Aorta (tissue), 5 donors: ENCODE measurements at regions of chr21 and their contacts with region 1.

Region 1: DNA sequence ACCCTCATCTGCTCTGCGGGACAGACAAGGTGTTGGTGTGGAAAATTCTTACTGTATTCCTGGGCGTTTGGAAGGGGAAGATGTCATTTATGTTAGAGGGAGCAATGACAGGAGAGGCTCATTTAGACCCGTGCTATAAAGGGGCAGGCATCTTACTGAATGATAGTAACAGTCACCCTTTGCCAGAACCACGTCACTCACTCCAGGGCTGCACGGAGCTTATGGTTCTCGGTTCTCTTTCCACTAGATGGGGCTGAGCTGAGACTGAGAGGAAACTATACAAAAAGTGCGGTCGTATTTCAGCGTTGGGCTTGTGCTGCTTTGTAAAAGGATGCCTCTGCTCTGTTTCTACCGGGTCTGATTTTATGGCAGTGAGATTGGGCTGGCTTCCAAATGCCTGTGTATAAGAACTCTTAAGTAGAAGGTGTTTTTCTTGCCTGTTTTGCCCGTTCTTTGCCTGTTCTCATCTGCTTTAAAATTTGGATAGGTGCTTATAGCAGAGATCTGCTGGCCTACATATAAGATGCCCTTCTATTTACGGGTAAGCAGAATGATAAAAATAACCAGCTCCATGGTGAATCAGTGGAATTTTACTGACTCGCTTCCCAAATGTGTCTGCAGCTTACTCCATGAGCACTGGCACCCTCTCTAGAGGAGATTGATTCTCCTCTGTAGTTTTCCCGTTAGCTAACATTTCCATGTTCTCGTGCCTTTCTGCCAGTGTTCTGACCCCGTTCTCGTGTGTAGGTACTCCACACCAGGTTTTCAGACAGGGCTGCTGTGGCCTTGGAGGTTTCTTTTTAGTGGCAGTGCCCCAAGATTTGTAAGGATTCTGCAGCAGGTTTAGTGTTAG is 55.9 kb downstream of the MRPS6 start:
- DNase-seq: peak in 1 of 2 donors; percentile 67
- ATAC-seq: peak; percentile 83
- H3K4me3 ChIP-seq: peak overlapping the region in 1 of 2 donors; percentile 22
- H3K27ac ChIP-seq: peak overlapping the region; percentile 84 to 93
- H3K4me1 ChIP-seq: peaks cover 5 to 20% of the 10 kb centered on the region in 2 donors
- H3K27me3 ChIP-seq: no peaks in the 10 kb centered on the region

Region 2: GRCh38 chr21:34073032-34073869 is 56.0 kb before region 1 on chr21 and contains the starts of genes MRPS6 and SLC5A3:
- intact Hi-C with region 1: loop called in 1 of 2 experiments (anchors 10 kb)
- DNase-seq: peak; percentile 91 to 94
- ATAC-seq: peak; percentile 91
- H3K4me3 ChIP-seq: peak within 1 kb of the TSS; percentile 93 to 100
- H3K27ac ChIP-seq: peak within 1 kb of the TSS; percentile 63 to 96
- H3K4me1 ChIP-seq: peaks cover 0 to 3% of the 10 kb centered on the region in 2 donors
- H3K27me3 ChIP-seq: no peaks in the 10 kb centered on the region
- total RNA-seq, gene MRPS6: 78.4 to 137 TPM
- total RNA-seq, gene SLC5A3: 25.2 to 82.3 TPM

Region 3: DNA sequence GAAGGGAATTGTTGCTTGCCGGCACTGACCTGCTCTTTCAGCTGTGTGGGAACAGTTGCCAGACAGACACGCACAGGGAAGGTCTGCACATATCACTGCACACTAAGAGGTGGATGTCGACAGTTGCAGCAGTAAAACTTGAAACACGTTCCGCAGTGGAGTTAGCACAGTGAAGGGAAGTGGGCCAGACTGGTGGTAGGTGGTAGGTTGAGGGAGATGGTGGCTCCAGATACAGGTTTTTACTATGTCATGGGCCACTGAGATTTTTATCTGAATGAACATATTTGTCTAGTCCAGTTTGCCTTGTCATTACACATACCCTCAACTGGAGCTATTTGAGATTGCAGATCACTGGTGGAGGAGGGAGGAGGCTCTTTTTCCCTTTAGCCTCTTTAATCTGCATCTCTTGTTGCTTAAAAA is 42.4 kb before region 1 on chr21:
- intact Hi-C with region 1: loop called in 1 of 2 experiments (anchors 5 kb)
- DNase-seq: no peak
- ATAC-seq: no peak
- H3K4me3 ChIP-seq: no peak overlapping the region
- H3K27ac ChIP-seq: peak overlapping the region in 1 of 2 donors; percentile 66
- H3K4me1 ChIP-seq: peaks cover 13 to 22% of the 10 kb centered on the region in 2 donors
- H3K27me3 ChIP-seq: no peaks in the 10 kb centered on the region

Region 4: GRCh38 chr21:34151545-34151944 is 22.3 kb after region 1 on chr21:
- intact Hi-C with region 1: loop called in 1 of 2 experiments (anchors 2 kb)
- DNase-seq: no peak
- ATAC-seq: no peak
- H3K4me3 ChIP-seq: no peak overlapping the region
- H3K27ac ChIP-seq: no peak overlapping the region
- H3K4me1 ChIP-seq: peaks cover 0 to 3% of the 10 kb centered on the region in 2 donors
- H3K27me3 ChIP-seq: no peaks in the 10 kb centered on the region

Region 5: DNA sequence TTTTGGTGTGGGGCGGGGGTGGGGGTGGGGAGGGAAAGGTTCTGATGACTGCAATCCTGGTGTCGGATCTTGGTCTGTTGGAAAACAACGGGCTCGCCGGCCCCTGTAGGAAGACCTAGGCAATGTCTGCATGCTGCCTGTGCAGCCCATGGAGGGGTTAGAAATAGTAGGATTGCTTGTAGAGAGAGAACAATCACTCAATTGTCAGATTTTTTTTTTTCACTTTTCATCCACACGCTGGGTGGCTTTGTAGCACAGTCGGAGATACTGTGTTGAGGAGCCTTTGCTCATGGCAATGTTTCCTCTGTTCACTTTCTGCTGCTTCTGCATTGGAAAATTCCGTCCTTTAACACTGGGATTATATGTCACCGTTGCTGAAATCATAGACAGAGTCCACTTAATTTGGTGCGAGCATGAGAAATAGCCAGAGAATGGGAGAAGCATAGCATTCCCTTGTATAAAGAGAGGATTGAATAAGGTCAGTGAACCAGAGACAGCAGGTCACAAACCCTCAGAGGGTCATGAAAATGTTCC is 51.6 kb after region 1 on chr21:
- intact Hi-C with region 1: loop called (anchors 5 kb)
- DNase-seq: no peak
- ATAC-seq: peak; percentile 51
- H3K4me3 ChIP-seq: peak overlapping the region; percentile 33 to 78
- H3K27ac ChIP-seq: peak overlapping the region; percentile 45 to 65
- H3K4me1 ChIP-seq: peaks cover 6% of the 10 kb centered on the region in 2 donors
- H3K27me3 ChIP-seq: no peaks in the 10 kb centered on the region

Region 6: GRCh38 chr21:34202553-34203372 is 73.5 kb after region 1 on chr21:
- intact Hi-C with region 1: loop called in 1 of 2 experiments (anchors 2 kb)
- DNase-seq: peak; percentile 72 to 84
- ATAC-seq: peak; percentile 60
- H3K4me3 ChIP-seq: no peak overlapping the region
- H3K27ac ChIP-seq: peak overlapping the region; percentile 77 to 79
- H3K4me1 ChIP-seq: no peaks in the 10 kb centered on the region
- H3K27me3 ChIP-seq: no peaks in the 10 kb centered on the region